AG04449 (cell line): ENCODE measurements at regions of chr17 and their contacts with region 1.

Region 1: GRCh38 chr17:76506408-76507349 is 5.5 kb upstream of the RHBDF2 start:
- DNase-seq: no peak
- H3K4me3 ChIP-seq: no peak overlapping the region
- CTCF ChIP-seq: peak; percentile 91

Region 2: GRCh38 chr17:76307299-76307965 is 199.2 kb before region 1 on chr17:
- CTCF ChIA-PET with region 1: interaction called, 13 read pairs
- POLR2A ChIA-PET with region 1: no interaction called
- DNase-seq: no peak
- H3K4me3 ChIP-seq: no peak overlapping the region
- CTCF ChIP-seq: no peak

Region 3: GRCh38 chr17:76492989-76493501 is 13.6 kb before region 1 on chr17:
- CTCF ChIA-PET with region 1: interaction called, 47 read pairs
- POLR2A ChIA-PET with region 1: interaction called, 4 read pairs
- DNase-seq: no peak
- H3K4me3 ChIP-seq: peak overlapping the region; percentile 12; the same call in 1 of the 2 replicates
- CTCF ChIP-seq: no peak

Region 4: DNA sequence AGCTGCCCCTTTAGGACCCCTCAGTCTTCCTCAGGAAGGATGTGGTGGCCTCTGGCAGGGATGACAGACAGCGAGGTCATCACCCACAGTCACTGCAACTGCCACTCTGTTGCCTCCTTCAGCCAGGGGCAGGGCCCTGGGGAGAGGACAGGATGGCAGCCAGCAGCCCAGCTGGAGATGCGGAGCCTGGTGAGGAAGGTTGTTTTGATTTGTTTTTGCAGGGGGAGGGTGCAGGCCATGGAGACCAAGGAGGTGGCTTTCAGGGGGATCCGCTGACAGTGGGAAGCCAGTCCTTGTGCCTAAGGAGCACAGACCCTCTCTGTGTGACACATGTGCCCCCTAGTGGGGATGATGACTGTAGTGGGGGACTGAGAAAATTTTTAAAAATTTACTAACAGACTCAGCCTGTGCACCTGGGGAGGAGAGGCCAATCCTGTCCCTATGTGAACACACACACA is 40.5 kb after region 1 on chr17:
- CTCF ChIA-PET with region 1: interaction called, 20 read pairs
- POLR2A ChIA-PET with region 1: no interaction called
- DNase-seq: no peak
- H3K4me3 ChIP-seq: no peak overlapping the region
- CTCF ChIP-seq: peak; percentile 68